Heart left ventricle (tissue), 16 donors: ENCODE measurements at regions of chr9 and their contacts with region 1.

Region 1: DNA sequence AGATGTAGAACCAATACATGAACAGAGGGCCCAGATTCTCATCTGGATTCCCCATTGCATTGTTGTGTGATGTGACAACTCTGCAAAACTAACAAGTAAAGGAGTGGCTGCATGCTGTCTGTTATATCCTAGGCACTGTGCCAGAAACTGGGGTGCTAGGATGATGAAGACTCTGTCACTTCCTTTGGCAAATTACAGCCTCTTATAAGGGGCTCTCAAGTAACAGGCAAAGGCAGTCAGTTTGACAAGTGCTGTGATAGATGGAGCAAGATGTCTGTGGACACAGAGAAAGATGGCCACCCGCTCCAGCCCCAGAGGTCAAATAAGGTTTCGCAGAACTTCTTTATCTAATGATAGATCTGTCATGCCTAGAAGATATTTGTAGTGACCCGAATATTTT is 115.7 kb downstream of the PAPPA start:
- DNase-seq: no peak
- ATAC-seq: no peak
- H3K4me3 ChIP-seq: no peak overlapping the region
- H3K27ac ChIP-seq: no peak overlapping the region
- H3K4me1 ChIP-seq: peaks cover 0 to 2% (median 0%) of the 10 kb centered on the region in 12 donors
- H3K27me3 ChIP-seq: no peaks in the 10 kb centered on the region
- CTCF ChIP-seq: no peak
- POLR2A ChIP-seq: no peak

Region 2: GRCh38 chr9:116318468-116319374 is 49.4 kb after region 1 on chr9:
- intact Hi-C with region 1: loop called in 1 of 10 experiments (anchors 10 kb)
- DNase-seq: peak; percentile 63 to 79 (median 70)
- ATAC-seq: peak; percentile 42 to 82 (median 70)
- H3K4me3 ChIP-seq: no peak overlapping the region
- H3K27ac ChIP-seq: peak overlapping the region in 11 of 12 donors; percentile 18 to 79 (median 51)
- H3K4me1 ChIP-seq: peaks cover 0 to 41% (median 17%) of the 10 kb centered on the region in 12 donors
- H3K27me3 ChIP-seq: no peaks in the 10 kb centered on the region
- CTCF ChIP-seq: no peak
- POLR2A ChIP-seq: no peak

Region 3: GRCh38 chr9:117809751-117810150 is 1540.5 kb after region 1 on chr9:
- intact Hi-C with region 1: no loop called
- DNase-seq: no peak
- ATAC-seq: no peak
- H3K4me3 ChIP-seq: no peak overlapping the region
- H3K27ac ChIP-seq: no peak overlapping the region
- H3K4me1 ChIP-seq: no peaks in the 10 kb centered on the region
- H3K27me3 ChIP-seq: no peaks in the 10 kb centered on the region
- CTCF ChIP-seq: no peak
- POLR2A ChIP-seq: no peak